CD14-positive monocyte (primary cell): ENCODE measurements at regions of chr15 and their contacts with region 1.

Region 1: GRCh38 chr15:40754883-40755811 is at the start of gene RMDN3:
- DNase-seq: peak; percentile 91 to 92 (median 92)
- H3K4me3 ChIP-seq: peak within 1 kb of the TSS; percentile 55 to 99 (median 90)
- H3K4me3 Mint-ChIP-seq: peak within 1 kb of the TSS; percentile 91 to 93
- H3K27ac ChIP-seq: peak within 1 kb of the TSS; percentile 46 to 90
- H3K27ac Mint-ChIP-seq: peak within 1 kb of the TSS; percentile 78 to 95 (median 90)
- H3K4me1 ChIP-seq: peaks cover 14 to 18% of the 10 kb centered on the region in 2 donors
- H3K4me1 Mint-ChIP-seq: peaks cover 12% of the 10 kb centered on the region
- H3K27me3 ChIP-seq: no peaks in the 10 kb centered on the region
- H3K27me3 Mint-ChIP-seq: peaks cover 0 to 1% (median 0%) of the 10 kb centered on the region in 3 donors
- CTCF ChIP-seq: no peak
- polyA plus RNA-seq, gene RMDN3: 9.8 to 13.5 (median 13.2) TPM

Region 2: DNA sequence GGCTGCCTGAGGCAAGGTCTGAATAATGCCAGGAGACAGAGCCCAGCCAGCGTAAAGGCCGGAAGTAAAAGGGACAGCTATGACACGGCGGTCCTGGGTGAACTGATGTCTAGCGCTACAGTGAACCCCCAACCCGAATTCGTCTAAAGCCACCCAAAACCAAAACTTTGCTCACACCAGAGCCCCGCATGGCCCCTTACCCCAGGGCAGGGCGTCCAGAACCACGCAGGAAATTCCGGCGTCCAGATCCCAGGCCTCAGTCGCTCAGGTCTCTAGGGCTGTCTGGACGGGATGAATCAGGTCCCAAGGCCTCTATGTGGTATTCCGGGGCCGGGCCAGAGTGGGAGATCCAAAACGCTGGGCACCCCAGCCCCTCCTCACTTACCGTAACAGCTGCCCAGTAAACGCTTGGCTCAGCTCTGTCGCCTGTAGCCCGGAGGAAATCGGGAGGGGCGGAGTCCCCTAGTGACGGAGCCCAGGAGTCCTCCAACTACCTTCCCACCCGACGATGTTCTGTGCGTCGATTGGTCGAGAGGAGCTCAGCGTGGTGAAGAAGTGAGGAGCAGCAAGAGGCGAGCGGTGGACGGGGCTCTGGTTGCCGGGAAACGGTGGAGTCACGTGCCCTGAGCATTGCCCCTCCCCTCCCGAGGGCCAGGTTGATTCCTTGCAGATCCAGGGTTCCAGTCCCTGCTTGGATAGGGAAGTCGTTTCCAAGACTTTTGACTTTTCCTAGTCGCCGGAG is 190.4 kb before region 1 on chr15 and contains the start of gene CCDC32:
- intact Hi-C with region 1: loop called in 1 of 2 experiments (anchors 10 kb)
- DNase-seq: peak; percentile 96 to 98 (median 97)
- H3K4me3 ChIP-seq: peak within 1 kb of the TSS; percentile 54 to 99 (median 91)
- H3K4me3 Mint-ChIP-seq: peak within 1 kb of the TSS; percentile 98 to 99
- H3K27ac ChIP-seq: peak within 1 kb of the TSS; percentile 83 to 97
- H3K27ac Mint-ChIP-seq: peak within 1 kb of the TSS; percentile 95 to 99 (median 98)
- H3K4me1 ChIP-seq: peaks cover 23 to 30% of the 10 kb centered on the region in 2 donors
- H3K4me1 Mint-ChIP-seq: peaks cover 35% of the 10 kb centered on the region
- H3K27me3 ChIP-seq: peaks cover 0 to 4% of the 10 kb centered on the region in 2 donors
- H3K27me3 Mint-ChIP-seq: peaks cover 1 to 8% (median 2%) of the 10 kb centered on the region in 3 donors
- CTCF ChIP-seq: no peak
- polyA plus RNA-seq, gene CCDC32: 7.5 to 37.3 (median 30.8) TPM